SK-N-SH (cell line): ENCODE measurements at regions of chr13 and their contacts with region 1.

Region 1: DNA sequence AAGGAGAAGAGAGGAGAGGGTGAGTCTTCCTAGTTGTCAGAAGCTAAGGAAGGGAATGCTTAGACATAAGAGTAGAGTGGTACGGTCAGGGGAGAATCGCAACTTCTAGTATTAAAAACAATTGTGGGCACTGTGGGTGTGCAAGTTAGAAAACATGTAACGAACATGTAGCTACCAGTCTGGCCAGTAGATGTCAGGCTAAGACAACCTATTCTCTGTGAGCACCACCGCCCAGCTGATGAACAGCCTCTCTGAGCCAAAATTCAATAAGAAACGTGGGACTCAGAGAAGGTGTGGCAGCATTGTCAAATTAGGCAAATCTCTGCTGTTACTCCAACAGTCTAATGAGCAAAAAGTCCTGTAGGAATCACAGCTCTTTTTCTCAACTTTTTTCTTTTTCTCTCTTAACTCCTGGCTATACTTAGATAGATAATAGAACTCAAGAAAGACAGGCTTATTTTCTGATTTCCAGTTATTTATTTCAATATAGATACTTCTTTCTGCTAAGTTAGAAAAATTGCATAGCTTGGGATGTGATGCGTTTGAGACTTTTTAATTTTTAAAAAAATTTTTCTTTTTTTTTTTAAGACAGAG is 186.2 kb downstream of the USP12 start:
- DNase-seq: peak; percentile 72
- H3K4me3 ChIP-seq: no peak overlapping the region; a peak in 1 of 4 replicates
- H3K27ac ChIP-seq: no peak overlapping the region
- H3K4me1 ChIP-seq: peaks cover 0 to 8% of the 10 kb centered on the region in 2 experiments; a peak in 2 of 4 replicates
- H3K27me3 ChIP-seq: no peaks in the 10 kb centered on the region
- CTCF ChIP-seq: peak; percentile 84
- EP300 ChIP-seq: no peak
- RAD21 ChIP-seq: peak; percentile 98

Region 2: GRCh38 chr13:26965952-26966700 is 19.3 kb before region 1 on chr13:
- CTCF ChIA-PET with region 1: interaction called, 18 read pairs
- POLR2A ChIA-PET with region 1: no interaction called
- DNase-seq: no peak
- H3K4me3 ChIP-seq: no peak overlapping the region
- H3K27ac ChIP-seq: no peak overlapping the region
- H3K4me1 ChIP-seq: peaks cover 0 to 7% of the 10 kb centered on the region in 2 experiments; a peak in 1 of 4 replicates
- H3K27me3 ChIP-seq: no peaks in the 10 kb centered on the region
- CTCF ChIP-seq: no peak
- EP300 ChIP-seq: no peak
- RAD21 ChIP-seq: no peak

Region 3: DNA sequence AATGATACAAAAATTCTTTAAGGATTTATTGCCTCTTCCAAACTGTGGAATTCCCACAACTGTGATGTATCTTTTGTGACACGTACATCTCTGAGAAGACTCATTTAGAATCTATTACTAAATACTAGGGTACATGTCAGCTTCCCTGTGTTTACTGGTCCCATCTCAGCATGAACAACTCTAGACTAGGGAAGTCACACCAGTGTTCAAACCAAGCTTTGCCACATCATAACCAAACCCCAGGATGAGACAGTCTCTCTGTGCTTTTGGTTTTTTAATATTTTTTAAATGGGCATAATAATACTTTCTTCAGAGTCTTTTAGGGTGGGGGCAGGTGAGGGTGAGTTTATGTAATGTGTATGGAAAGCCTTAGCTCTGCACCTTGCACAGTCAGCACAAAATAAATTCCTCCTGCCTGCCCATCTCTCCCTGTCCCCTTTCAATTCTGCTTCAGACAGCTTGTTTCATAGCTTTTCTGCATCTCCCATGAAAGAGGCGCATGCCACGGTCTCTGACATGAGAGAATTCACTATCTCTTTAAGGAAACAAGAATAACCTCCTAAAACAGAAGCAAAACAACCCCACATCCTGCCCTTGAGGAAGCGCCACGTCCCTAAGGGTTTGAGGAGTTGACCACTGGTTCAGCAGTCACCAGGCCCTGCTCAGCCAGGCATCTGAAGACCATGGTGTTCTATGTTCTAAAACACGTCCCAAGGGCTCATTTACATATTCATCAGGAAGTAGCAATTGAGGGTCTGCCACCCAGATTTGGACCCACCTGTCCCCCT is 11.8 kb after region 1 on chr13:
- CTCF ChIA-PET with region 1: interaction called, 16 read pairs
- POLR2A ChIA-PET with region 1: no interaction called
- DNase-seq: no peak
- H3K4me3 ChIP-seq: no peak overlapping the region
- H3K27ac ChIP-seq: no peak overlapping the region
- H3K4me1 ChIP-seq: no peaks in the 10 kb centered on the region
- H3K27me3 ChIP-seq: no peaks in the 10 kb centered on the region
- CTCF ChIP-seq: no peak
- EP300 ChIP-seq: no peak
- RAD21 ChIP-seq: no peak

Region 4: DNA sequence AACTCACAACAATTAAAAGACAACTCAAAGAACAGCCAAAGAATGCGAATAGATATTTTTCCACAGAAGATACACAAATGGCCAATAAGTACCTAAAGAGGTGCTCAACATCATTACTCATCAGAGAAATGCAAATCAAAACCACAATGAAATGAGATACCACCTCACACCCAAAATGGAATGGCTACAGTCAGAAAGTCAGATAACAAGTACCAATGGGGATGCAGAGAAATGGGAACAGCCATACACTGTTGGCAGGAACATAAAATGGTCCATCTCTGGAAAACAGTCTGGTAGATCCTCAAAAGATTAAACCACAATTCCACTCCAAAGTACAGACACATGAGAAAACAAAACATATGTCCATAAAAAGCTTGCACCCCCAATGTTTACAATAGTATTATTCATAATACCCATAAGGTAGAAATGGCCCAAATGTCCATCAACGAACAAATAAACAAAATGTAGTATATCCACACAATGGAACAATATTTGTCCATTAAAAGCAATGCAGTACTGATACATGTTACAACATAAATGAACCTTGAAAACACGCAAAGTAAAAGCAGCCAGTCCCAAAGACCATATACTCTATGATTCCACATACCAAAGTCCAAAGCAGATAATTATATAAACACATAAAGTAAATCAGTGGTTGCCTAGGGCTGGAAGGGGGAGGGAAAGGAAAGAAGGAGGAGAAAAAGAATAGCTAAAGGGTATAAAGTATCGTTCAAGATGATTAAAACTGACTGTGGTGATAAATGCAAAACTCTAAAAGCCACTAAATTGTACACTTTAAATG is 166.6 kb after region 1 on chr13:
- CTCF ChIA-PET with region 1: no interaction called
- POLR2A ChIA-PET with region 1: no interaction called
- DNase-seq: no peak
- H3K4me3 ChIP-seq: no peak overlapping the region
- H3K27ac ChIP-seq: no peak overlapping the region
- H3K4me1 ChIP-seq: no peaks in the 10 kb centered on the region; a peak in 1 of 4 replicates
- H3K27me3 ChIP-seq: no peaks in the 10 kb centered on the region
- CTCF ChIP-seq: no peak
- EP300 ChIP-seq: no peak
- RAD21 ChIP-seq: no peak

Region 5: GRCh38 chr13:27339299-27339698 is 353.9 kb after region 1 on chr13:
- CTCF ChIA-PET with region 1: interaction called, 22 read pairs
- POLR2A ChIA-PET with region 1: no interaction called
- DNase-seq: peak; percentile 61
- H3K4me3 ChIP-seq: no peak overlapping the region
- H3K27ac ChIP-seq: no peak overlapping the region
- H3K4me1 ChIP-seq: no peaks in the 10 kb centered on the region; a peak in 1 of 4 replicates
- H3K27me3 ChIP-seq: peaks cover 42% of the 10 kb centered on the region
- CTCF ChIP-seq: peak; percentile 62
- EP300 ChIP-seq: no peak
- RAD21 ChIP-seq: peak; percentile 54

Region 6: GRCh38 chr13:27353166-27353583 is 367.8 kb after region 1 on chr13:
- CTCF ChIA-PET with region 1: interaction called, 273 read pairs
- POLR2A ChIA-PET with region 1: no interaction called
- DNase-seq: no peak
- H3K4me3 ChIP-seq: peak overlapping the region in 1 of 2 experiments; percentile 48; a peak in 2 of 4 replicates
- H3K27ac ChIP-seq: no peak overlapping the region
- H3K4me1 ChIP-seq: no peaks in the 10 kb centered on the region
- H3K27me3 ChIP-seq: no peaks in the 10 kb centered on the region; the same call in 1 of the 2 replicates
- CTCF ChIP-seq: no peak
- EP300 ChIP-seq: no peak
- RAD21 ChIP-seq: no peak